Transverse colon (tissue), 4 donors: ENCODE measurements at regions of chr17 and their contacts with region 1.

Region 1: GRCh38 chr17:37047631-37048104 is 98.9 kb downstream of the AATF start:
- DNase-seq: peak; percentile 75
- H3K4me3 ChIP-seq: no peak overlapping the region
- H3K27ac ChIP-seq: no peak overlapping the region
- H3K4me1 ChIP-seq: peaks cover 0 to 3% (median 2%) of the 10 kb centered on the region in 4 donors
- H3K27me3 ChIP-seq: no peaks in the 10 kb centered on the region
- CTCF ChIP-seq: peak; percentile 81 to 88 (median 86)
- EP300 ChIP-seq: no peak
- POLR2A ChIP-seq: no peak

Region 2: GRCh38 chr17:35257208-35257659 is 1790.4 kb before region 1 on chr17:
- in situ Hi-C with region 1: no loop called
- intact Hi-C with region 1: loop called (anchors 5 kb)
- DNase-seq: peak; percentile 59
- H3K4me3 ChIP-seq: no peak overlapping the region
- H3K27ac ChIP-seq: peak overlapping the region; percentile 4 to 15 (median 9)
- H3K4me1 ChIP-seq: peaks cover 6 to 45% (median 21%) of the 10 kb centered on the region in 4 donors
- H3K27me3 ChIP-seq: peaks cover 18% of the 10 kb centered on the region
- CTCF ChIP-seq: no peak
- EP300 ChIP-seq: no peak
- POLR2A ChIP-seq: no peak

Region 3: GRCh38 chr17:36611345-36612072 is 436.2 kb before region 1 on chr17:
- in situ Hi-C with region 1: loop called in 1 of 4 experiments (anchors 10 kb)
- intact Hi-C with region 1: no loop called
- DNase-seq: no peak
- H3K4me3 ChIP-seq: no peak overlapping the region
- H3K27ac ChIP-seq: no peak overlapping the region
- H3K4me1 ChIP-seq: peaks cover 0 to 6% (median 3%) of the 10 kb centered on the region in 4 donors
- H3K27me3 ChIP-seq: peaks cover 11% of the 10 kb centered on the region
- CTCF ChIP-seq: no peak
- EP300 ChIP-seq: no peak
- POLR2A ChIP-seq: no peak

Region 4: GRCh38 chr17:36980280-36980761 is 67.3 kb before region 1 on chr17:
- in situ Hi-C with region 1: no loop called
- intact Hi-C with region 1: no loop called
- DNase-seq: no peak
- H3K4me3 ChIP-seq: no peak overlapping the region
- H3K27ac ChIP-seq: no peak overlapping the region
- H3K4me1 ChIP-seq: peaks cover 0 to 12% (median 3%) of the 10 kb centered on the region in 4 donors
- H3K27me3 ChIP-seq: no peaks in the 10 kb centered on the region
- CTCF ChIP-seq: no peak
- EP300 ChIP-seq: no peak
- POLR2A ChIP-seq: no peak